Dendritic cell treated with granulocyte-macrophage colony-stimulating factor and Interleukin-4, amounts not matched to agents 40 ng/mL and 50 ng/mL, for 4 days (primary cell): ENCODE measurements at regions of chr11 and their contacts with region 1.

Region 1: DNA sequence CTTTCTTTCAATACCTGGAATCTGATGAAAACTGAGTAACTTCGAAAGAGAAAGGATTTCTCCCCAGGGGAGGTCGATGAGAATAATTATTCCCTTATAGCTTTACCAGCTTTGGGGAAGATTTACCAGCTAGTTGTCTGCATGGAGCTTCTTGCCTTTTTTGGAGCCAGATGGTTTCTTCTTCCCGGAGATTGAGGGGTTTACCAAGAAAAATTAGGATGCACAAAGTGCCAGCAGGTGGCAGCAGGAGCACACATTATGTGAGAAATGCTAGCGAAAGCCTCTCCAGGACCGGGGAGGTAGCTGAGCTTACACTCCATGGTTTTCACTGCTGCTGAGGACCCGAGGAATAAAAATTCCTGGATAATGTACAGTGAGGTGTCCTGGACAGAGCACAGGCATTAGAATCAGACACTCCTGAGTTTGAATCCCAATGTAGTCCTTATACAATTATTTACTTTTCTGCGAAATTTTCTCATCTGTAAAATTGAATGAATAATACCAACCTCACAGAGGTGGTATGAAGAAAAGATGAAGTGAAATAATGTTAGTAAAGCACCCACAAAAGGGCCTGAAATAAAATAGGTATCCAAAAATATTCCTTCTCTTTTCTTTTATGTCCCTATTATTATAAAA is 46.0 kb upstream of the PARVA start:
- H3K4me3 Mint-ChIP-seq: no peak overlapping the region
- H3K27ac Mint-ChIP-seq: no peak overlapping the region
- H3K4me1 Mint-ChIP-seq: no peaks in the 10 kb centered on the region
- H3K27me3 Mint-ChIP-seq: peaks cover 3% of the 10 kb centered on the region

Region 2: GRCh38 chr11:12306830-12307229 is 24.5 kb before region 1 on chr11:
- intact Hi-C with region 1: no loop called
- H3K4me3 Mint-ChIP-seq: no peak overlapping the region
- H3K27ac Mint-ChIP-seq: no peak overlapping the region
- H3K4me1 Mint-ChIP-seq: no peaks in the 10 kb centered on the region
- H3K27me3 Mint-ChIP-seq: no peaks in the 10 kb centered on the region

Region 3: GRCh38 chr11:12599408-12600143 is 268.2 kb after region 1 on chr11:
- intact Hi-C with region 1: loop called (anchors 5 kb)
- H3K4me3 Mint-ChIP-seq: no peak overlapping the region
- H3K27ac Mint-ChIP-seq: no peak overlapping the region
- H3K4me1 Mint-ChIP-seq: no peaks in the 10 kb centered on the region
- H3K27me3 Mint-ChIP-seq: peaks cover 11% of the 10 kb centered on the region